Caco-2 (cell line): ENCODE measurements at regions of chr18 and their contacts with region 1.

Region 1: DNA sequence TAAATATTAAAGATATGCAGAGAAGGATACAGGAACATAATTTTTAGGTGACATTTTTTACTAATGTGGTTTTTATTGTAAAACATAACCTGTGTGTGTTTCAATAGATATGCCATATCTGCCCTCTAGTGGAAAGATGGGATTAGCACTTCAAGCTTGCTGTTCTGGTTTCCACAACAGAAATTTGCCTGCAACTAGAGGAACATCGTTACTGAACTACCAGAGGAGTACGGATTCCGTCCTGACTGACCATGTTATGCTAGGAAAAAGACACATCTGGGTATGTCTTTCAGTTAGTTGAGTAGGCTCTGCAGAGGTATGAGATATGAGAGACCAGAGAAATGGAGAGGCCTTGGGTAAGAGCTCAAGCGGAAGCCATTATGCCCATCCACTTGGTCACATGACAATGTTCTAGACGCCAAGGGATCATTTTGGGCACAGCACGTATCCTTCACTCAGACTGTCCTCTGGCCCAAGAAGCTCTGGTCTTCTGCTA is 104.9 kb downstream of the MBD2 start:
- DNase-seq: peak in 1 of 2 experiments; percentile 36
- H3K4me3 ChIP-seq: no peak overlapping the region
- H3K4me3 Mint-ChIP-seq: peak overlapping the region; percentile 70
- H3K27ac Mint-ChIP-seq: no peak overlapping the region
- H3K4me1 ChIP-seq: no peaks in the 10 kb centered on the region
- H3K4me1 Mint-ChIP-seq: no peaks in the 10 kb centered on the region
- H3K27me3 ChIP-seq: no peaks in the 10 kb centered on the region
- H3K27me3 Mint-ChIP-seq: no peaks in the 10 kb centered on the region
- CTCF ChIP-seq: peak; percentile 49 to 58

Region 2: DNA sequence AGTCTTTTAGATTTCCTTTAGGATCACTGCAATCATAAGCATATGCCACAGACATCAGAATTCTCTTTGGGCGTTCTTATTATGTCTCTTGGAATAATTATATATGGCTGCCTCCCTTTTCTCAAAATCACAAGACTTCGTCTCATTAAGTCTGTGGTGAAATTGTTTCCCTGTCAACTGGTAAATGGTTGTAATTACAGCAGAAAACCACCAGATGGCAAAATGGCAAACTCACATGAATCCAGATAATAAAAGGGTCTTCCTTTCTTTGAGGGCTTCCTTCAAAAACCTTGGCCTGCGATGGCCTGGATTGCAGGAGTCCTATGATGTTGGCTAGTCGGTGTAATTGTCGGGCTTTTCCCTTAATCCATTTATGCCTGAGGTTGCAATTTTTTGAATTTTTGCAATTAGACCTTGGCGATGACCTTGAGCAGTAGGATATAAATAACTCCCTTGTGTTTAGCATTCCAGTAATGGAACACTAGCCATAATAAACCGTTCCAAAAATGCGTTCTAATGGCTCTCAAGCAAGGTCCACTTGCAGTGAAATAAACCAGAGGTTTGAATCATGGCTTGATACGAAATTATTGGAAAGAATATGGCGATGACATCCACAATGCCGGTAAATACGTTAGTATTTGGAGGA is 551.5 kb before region 1 on chr18:
- CTCF ChIA-PET with region 1: no interaction called
- POLR2A ChIA-PET with region 1: no interaction called
- intact Hi-C with region 1: loop called (anchors 1 kb)
- DNase-seq: no peak
- H3K4me3 ChIP-seq: no peak overlapping the region
- H3K4me3 Mint-ChIP-seq: no peak overlapping the region
- H3K27ac Mint-ChIP-seq: no peak overlapping the region
- H3K4me1 ChIP-seq: no peaks in the 10 kb centered on the region
- H3K4me1 Mint-ChIP-seq: no peaks in the 10 kb centered on the region
- H3K27me3 ChIP-seq: no peaks in the 10 kb centered on the region
- H3K27me3 Mint-ChIP-seq: peaks cover 6% of the 10 kb centered on the region
- CTCF ChIP-seq: peak; percentile 16 to 37

Region 3: DNA sequence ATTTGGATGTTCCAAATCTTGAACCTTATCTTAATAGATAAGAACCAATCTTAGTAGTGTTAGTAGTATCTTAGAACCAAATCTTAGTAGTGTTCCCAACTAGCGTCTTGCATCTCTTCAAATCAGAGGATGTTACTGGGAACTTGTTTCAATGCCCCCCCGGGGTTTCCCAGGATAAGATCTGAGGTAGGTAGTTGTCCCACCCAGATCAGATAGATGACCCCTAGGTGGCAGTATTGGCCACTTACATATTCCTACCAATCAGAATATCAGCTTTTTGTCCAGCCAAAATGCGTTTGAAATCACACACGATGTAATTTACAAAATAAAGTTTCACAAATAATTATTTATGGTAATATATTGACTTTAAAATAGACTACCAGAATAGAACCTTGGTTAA is 209.9 kb before region 1 on chr18:
- CTCF ChIA-PET with region 1: interaction called, 5 read pairs
- POLR2A ChIA-PET with region 1: no interaction called
- intact Hi-C with region 1: loop called (anchors 1 kb)
- DNase-seq: peak in 1 of 2 experiments; percentile 42
- H3K4me3 ChIP-seq: no peak overlapping the region
- H3K4me3 Mint-ChIP-seq: no peak overlapping the region
- H3K27ac Mint-ChIP-seq: no peak overlapping the region
- H3K4me1 ChIP-seq: no peaks in the 10 kb centered on the region
- H3K4me1 Mint-ChIP-seq: no peaks in the 10 kb centered on the region
- H3K27me3 ChIP-seq: no peaks in the 10 kb centered on the region
- H3K27me3 Mint-ChIP-seq: no peaks in the 10 kb centered on the region
- CTCF ChIP-seq: peak; percentile 41 to 48

Region 4: DNA sequence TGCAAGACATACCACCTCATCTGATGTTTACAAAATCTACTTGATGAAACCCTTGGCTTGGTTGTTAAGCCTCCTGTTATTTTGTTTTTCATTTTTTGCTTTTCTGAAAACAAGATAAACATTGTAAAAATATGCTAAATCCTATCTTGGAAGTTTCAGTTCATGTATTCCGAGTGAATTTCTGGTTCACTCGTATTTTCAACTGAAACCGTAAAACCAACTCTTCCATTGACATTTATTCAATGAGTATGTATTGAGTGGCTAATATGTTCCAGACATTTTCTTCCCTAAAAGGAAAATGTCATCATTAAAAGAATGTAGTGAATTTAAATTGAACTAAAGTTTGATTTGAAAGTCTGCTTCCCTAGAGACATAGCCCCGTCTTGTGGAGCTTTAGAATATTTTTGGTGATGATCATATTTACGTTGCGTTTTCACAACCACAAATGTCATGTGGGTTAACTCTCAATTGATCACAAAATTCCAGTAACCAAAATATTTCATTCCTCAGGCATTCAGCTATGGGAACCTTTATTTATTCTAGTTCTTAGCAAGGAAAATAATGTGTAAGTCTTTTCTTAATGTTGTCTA is 99.3 kb before region 1 on chr18:
- CTCF ChIA-PET with region 1: no interaction called
- POLR2A ChIA-PET with region 1: no interaction called
- intact Hi-C with region 1: no loop called
- DNase-seq: no peak
- H3K4me3 ChIP-seq: no peak overlapping the region
- H3K4me3 Mint-ChIP-seq: no peak overlapping the region
- H3K27ac Mint-ChIP-seq: no peak overlapping the region
- H3K4me1 ChIP-seq: no peaks in the 10 kb centered on the region
- H3K4me1 Mint-ChIP-seq: no peaks in the 10 kb centered on the region
- H3K27me3 ChIP-seq: no peaks in the 10 kb centered on the region
- H3K27me3 Mint-ChIP-seq: no peaks in the 10 kb centered on the region
- CTCF ChIP-seq: no peak